ENCODE measurements at regions of chr2 and their contacts with region 1.

Region 1: DNA sequence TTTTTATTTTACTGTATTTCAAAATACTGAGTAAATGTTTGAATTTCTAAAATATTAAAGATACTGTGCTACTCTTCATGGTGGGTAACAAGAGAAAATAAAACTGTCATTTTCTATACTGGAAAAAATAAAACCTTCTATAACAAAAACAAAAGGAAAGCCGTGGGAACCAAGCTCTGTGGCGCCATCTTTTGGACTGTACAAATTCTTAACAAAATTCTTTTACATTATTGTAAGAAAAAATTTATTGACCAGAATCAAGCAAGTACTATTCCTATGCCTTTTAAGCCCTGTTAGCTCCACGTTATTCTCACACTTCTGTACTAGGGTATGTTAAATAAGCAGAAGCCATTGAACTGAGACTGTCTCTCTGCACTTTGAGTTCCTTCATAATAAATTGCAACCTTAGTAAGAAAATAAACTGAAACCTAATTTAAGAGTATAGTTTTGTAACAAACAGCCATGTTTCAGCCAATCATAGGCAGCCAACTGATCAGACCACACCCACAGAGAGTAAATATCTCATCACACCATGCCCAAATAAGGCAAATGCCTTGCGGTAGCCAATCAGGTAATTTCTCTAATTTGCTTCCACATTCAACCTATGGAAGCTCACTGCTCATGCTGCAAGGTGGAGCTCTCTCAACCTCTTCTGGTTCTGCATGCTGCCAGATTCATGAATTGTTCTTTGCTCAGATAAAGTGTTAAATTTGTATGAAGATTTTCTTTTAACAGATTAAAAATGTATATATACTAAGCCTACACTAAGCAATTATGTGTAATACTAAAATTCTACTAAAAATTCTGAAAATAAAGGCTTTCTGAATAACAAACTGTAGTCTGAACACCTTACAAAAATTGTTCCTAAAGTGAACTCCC is 42.2 kb downstream of the HIBCH start:
- DNase-seq: no peak
- H3K4me3 ChIP-seq: no peak overlapping the region
- CTCF ChIP-seq: peak; percentile 38

Region 2: GRCh38 chr2:190183539-190183938 is 93.9 kb before region 1 on chr2:
- CTCF ChIA-PET with region 1: no interaction called
- POLR2A ChIA-PET with region 1: no interaction called
- DNase-seq: no peak
- H3K4me3 ChIP-seq: no peak overlapping the region
- CTCF ChIP-seq: no peak

Region 3: GRCh38 chr2:190267302-190267701 is 10.2 kb before region 1 on chr2:
- CTCF ChIA-PET with region 1: interaction called, 17 read pairs
- POLR2A ChIA-PET with region 1: no interaction called
- DNase-seq: no peak
- H3K4me3 ChIP-seq: no peak overlapping the region
- CTCF ChIP-seq: no peak